ENCODE measurements at regions of chrX and their contacts with region 1.

Region 1: DNA sequence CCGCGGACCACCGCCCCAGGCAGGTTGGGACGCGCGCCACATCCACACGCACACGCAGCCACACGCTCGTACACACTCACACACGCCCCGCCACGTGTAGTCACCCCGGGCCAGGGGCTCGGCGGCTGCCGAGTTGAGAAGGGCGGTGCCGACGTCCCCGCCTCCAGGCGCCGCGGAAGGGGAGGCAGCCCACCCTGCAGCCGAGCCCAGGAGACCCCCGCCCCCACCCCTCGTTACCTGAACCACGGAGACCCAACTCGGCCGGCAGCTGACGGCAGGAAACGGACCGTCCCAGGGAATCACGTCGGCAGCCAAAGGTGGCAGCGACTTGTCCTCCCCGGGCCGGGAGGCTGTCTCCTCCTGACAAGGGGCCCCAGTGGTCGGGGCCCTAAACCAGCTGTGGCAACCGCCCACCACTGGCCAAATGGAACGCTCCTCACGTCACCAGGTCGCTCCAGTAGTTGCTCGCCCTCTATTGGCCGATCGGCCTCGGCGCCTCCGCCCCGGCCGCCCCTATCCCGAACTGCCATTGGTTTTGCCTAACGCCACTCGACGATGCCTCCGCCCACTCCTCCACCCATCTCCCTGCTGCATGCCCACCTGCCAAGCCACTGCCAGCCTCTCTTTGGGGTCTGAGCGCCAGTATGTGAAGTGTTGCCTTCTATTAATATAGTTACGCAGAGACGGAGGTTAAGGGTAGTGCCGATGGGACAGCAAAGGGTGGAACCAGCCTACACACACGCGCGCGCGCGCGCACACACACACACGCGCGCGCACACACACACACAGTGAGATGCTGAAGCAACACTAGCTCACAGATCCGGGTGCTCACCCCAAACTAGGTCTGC is at the start of gene ZDHHC9:
- DNase-seq: peak; percentile 82
- H3K4me3 Mint-ChIP-seq: peak within 1 kb of the TSS; percentile 86
- H3K27ac Mint-ChIP-seq: peak within 1 kb of the TSS; percentile 85
- H3K4me1 Mint-ChIP-seq: peaks cover 16% of the 10 kb centered on the region
- H3K27me3 Mint-ChIP-seq: no peaks in the 10 kb centered on the region
- total RNA-seq, gene ZDHHC9: 13.0 and 13.9 TPM in 2 replicates

Region 2: DNA sequence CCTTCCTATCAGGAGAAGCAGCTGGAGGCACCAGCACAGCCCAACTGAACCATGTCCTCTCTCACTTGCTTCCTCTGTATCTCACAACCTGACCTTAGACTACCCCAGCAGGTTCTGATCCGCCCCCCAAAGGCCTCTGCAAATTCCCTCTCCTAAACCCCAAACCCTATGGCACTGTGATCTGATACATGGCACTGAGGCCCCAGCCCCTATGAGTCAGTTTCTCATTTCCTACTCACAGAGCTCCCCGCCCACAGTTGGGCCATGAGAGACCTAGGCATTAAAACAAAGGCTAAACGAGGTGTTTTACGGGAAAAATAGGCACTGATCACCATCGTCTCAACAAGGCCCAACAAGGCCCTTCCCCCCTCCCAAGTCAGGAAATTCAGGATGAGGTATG is 44.8 kb before region 1 on chrX:
- intact Hi-C with region 1: loop called (anchors 5 kb)
- DNase-seq: no peak
- H3K4me3 Mint-ChIP-seq: no peak overlapping the region
- H3K27ac Mint-ChIP-seq: peak overlapping the region; percentile 51
- H3K4me1 Mint-ChIP-seq: peaks cover 21% of the 10 kb centered on the region
- H3K27me3 Mint-ChIP-seq: no peaks in the 10 kb centered on the region

Region 3: GRCh38 chrX:129808829-129809796 is 34.6 kb before region 1 on chrX:
- intact Hi-C with region 1: loop called (anchors 1 kb)
- DNase-seq: no peak
- H3K4me3 Mint-ChIP-seq: no peak overlapping the region
- H3K27ac Mint-ChIP-seq: peak overlapping the region; percentile 52
- H3K4me1 Mint-ChIP-seq: peaks cover 18% of the 10 kb centered on the region
- H3K27me3 Mint-ChIP-seq: no peaks in the 10 kb centered on the region

Measured in activated T-helper 2 cell treated with anti-CD3 and anti-CD28 coated beads, Interferon-gamma antibody, Interleukin-2, Interleukin-4, amounts not matched to agents 10 μg/mL and 5 μg/mL and 100 μg/mL, durations not matched to agents 14 hours and 24 hours and 36 hours (primary cell).